Left colon (tissue), 2 donors: ENCODE measurements at regions of chr6 and their contacts with region 1.

Region 1: GRCh38 chr6:50986319-50986718 is 167.6 kb downstream of the TFAP2B start:
- DNase-seq: no peak
- ATAC-seq: no peak

Region 2: DNA sequence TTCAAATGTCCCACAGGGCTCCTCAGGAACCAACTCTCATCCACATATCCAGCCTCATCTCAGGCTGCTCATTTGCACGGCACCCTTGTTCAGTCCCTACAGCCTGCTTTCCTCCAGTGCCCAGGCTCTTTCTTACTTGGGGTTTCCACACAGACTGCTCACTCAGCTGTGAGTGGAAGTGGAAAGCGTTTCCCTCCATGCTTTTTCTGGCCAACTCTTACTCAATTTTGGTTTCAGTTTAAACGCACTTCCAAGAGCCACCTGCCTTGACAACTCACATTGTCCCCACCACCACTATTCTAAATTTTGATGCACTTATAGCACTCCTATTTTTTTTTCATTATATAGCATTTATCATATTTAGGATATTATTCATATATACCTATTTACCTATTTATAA is 734.0 kb after region 1 on chr6:
- intact Hi-C with region 1: loop called in 1 of 2 experiments (anchors 5 kb)
- DNase-seq: no peak
- ATAC-seq: no peak